ENCODE measurements at regions of chr18 and their contacts with region 1.

Region 1: GRCh38 chr18:3217948-3218647 is 1.7 kb downstream of the MYOM1 start:
- DNase-seq: no peak
- ATAC-seq: no peak
- H3K4me3 Mint-ChIP-seq: no peak overlapping the region
- H3K27ac Mint-ChIP-seq: no peak overlapping the region
- H3K4me1 Mint-ChIP-seq: no peaks in the 10 kb centered on the region
- H3K27me3 Mint-ChIP-seq: no peaks in the 10 kb centered on the region
- CTCF ChIP-seq: no peak

Region 2: DNA sequence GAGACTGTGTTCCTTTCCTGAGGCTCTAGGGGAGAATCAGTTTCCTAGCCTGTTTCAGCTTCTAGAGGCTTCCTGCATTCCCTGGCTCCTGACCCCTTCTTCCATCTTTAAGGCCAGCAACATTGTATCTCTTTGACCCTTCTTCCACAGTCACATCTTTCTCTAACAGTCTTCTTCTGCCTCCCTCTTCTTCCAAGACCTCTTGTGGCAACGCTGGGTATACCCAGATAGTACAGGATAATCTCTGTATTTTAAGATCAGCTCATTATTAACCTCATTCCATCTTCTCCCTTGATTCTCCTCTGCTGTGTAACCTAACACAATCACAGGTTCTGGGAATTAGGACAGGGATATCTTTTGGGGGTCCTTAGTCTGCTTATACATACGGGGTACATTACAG is 20.6 kb after region 1 on chr18:
- CTCF ChIA-PET with region 1: interaction called, 3 read pairs
- POLR2A ChIA-PET with region 1: interaction called, 10 read pairs
- intact Hi-C with region 1: no loop called
- DNase-seq: no peak
- ATAC-seq: no peak
- H3K4me3 Mint-ChIP-seq: no peak overlapping the region
- H3K27ac Mint-ChIP-seq: no peak overlapping the region
- H3K4me1 Mint-ChIP-seq: no peaks in the 10 kb centered on the region
- H3K27me3 Mint-ChIP-seq: no peaks in the 10 kb centered on the region
- CTCF ChIP-seq: no peak

Region 3: DNA sequence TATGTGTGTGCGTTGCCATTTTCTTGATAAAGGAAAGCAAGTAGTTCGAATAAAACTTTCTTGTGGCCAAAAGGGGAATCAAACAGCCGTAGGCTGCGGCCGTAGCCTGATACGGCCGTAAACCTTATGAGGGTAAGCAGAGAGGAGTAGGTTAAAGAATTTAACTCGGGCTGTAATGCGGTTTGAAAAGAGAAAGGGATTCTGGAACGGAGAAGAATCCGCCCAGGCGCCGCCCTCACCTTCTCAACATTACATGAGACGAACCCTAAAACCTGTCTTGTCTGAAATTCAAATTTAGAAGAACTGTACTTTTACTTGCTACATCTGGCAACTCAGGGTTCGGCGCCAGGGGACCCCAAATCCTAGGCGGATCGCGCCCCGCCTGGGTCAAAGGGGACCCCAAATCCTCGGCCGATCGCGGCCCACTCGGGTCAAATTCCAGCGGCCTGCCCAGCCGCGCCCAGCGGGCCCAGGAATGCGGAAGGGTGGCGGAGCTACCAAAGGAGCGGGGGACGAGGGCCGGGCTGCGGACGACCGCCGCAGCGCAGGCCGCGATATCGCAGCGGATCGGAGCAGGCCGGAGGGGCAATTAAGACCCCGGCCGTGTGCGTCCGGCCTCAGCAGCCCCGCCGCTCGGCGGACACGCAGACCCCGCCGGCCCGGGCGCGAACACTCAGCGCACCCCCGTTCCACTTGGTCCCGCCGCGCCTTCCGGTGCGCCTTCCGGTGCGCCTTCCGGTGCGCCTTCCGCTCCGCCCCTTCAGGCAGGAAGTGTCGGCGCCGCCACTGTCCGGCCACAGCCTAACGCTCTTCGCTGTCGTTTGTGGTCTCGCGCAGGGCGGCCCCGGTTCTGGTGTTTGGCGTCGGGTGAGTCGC is 43.5 kb after region 1 on chr18 and contains the start of gene MYL12B:
- CTCF ChIA-PET with region 1: no interaction called
- POLR2A ChIA-PET with region 1: no interaction called
- intact Hi-C with region 1: no loop called
- DNase-seq: peak; percentile 81
- ATAC-seq: peak; percentile 83
- H3K4me3 Mint-ChIP-seq: peak within 1 kb of the TSS; percentile 94
- H3K27ac Mint-ChIP-seq: peak within 1 kb of the TSS; percentile 97
- H3K4me1 Mint-ChIP-seq: peaks cover 80% of the 10 kb centered on the region
- H3K27me3 Mint-ChIP-seq: no peaks in the 10 kb centered on the region
- CTCF ChIP-seq: no peak
- total RNA-seq, gene MYL12B: 185 and 198 TPM in 2 replicates

Region 4: GRCh38 chr18:3360211-3360610 is 142.1 kb after region 1 on chr18:
- CTCF ChIA-PET with region 1: no interaction called
- POLR2A ChIA-PET with region 1: no interaction called
- intact Hi-C with region 1: no loop called
- DNase-seq: no peak
- ATAC-seq: no peak
- H3K4me3 Mint-ChIP-seq: no peak overlapping the region
- H3K27ac Mint-ChIP-seq: no peak overlapping the region
- H3K4me1 Mint-ChIP-seq: no peaks in the 10 kb centered on the region
- H3K27me3 Mint-ChIP-seq: no peaks in the 10 kb centered on the region
- CTCF ChIP-seq: no peak